Activated T-helper 2 cell treated with anti-CD3 and anti-CD28 coated beads, Interferon-gamma antibody, Interleukin-2, Interleukin-4, amounts not matched to agents 10 μg/mL and 5 μg/mL and 100 μg/mL, durations not matched to agents 14 hours and 24 hours and 36 hours (primary cell): ENCODE measurements at regions of chr11 and their contacts with region 1.

Region 1: GRCh38 chr11:121464352-121464946 is 11.7 kb upstream of the SORL1-AS1 start:
- DNase-seq: peak; percentile 73
- H3K4me3 Mint-ChIP-seq: peak overlapping the region; percentile 11
- H3K27ac Mint-ChIP-seq: peak overlapping the region; percentile 92
- H3K4me1 Mint-ChIP-seq: peaks cover 86% of the 10 kb centered on the region
- H3K27me3 Mint-ChIP-seq: no peaks in the 10 kb centered on the region

Region 2: GRCh38 chr11:121367001-121367843 is 97.2 kb before region 1 on chr11:
- intact Hi-C with region 1: no loop called
- DNase-seq: peak; percentile 10
- H3K4me3 Mint-ChIP-seq: peak overlapping the region; percentile 62
- H3K27ac Mint-ChIP-seq: peak overlapping the region; percentile 70
- H3K4me1 Mint-ChIP-seq: peaks cover 29% of the 10 kb centered on the region
- H3K27me3 Mint-ChIP-seq: no peaks in the 10 kb centered on the region

Region 3: DNA sequence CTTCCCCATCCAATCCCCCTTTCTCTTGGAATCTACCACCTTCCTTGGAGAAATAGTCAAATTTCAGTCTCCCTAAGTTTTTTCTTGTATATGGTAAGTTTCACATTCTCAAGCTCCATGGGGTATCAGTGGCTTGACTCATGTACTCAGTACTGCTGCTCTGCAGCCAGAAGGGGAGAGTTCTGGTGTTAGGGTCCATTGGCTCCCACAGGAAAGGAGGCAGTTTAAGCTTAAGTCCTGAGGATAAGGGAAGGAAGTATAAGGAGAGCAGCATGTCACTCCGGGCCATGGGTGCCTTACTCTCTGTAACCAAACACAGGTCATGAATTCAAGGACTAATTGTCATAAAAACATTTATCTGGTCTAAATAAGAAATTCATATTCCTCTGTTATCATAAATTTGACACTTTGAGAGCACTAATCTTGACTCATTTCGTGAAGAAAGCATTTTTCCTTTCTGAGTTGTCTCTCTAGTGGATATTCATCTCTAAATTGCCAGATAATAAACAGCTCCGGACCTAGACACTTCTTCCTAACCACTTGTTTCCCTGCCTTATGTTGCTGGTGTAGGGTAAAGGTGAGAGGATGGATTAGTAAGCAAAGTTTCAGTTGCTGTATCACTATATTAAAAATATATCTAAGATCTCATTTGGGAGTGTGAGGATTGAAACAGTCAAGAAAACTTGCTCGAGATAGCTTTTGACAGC is 32.5 kb before region 1 on chr11:
- intact Hi-C with region 1: loop called (anchors 2 kb)
- DNase-seq: no peak
- H3K4me3 Mint-ChIP-seq: no peak overlapping the region
- H3K27ac Mint-ChIP-seq: no peak overlapping the region
- H3K4me1 Mint-ChIP-seq: peaks cover 17% of the 10 kb centered on the region
- H3K27me3 Mint-ChIP-seq: peaks cover 5% of the 10 kb centered on the region

Region 4: GRCh38 chr11:121482231-121483129 is 18.0 kb after region 1 on chr11:
- intact Hi-C with region 1: loop called (anchors 1 kb)
- DNase-seq: peak; percentile 52
- H3K4me3 Mint-ChIP-seq: peak overlapping the region; percentile 71
- H3K27ac Mint-ChIP-seq: peak overlapping the region; percentile 92
- H3K4me1 Mint-ChIP-seq: peaks cover 33% of the 10 kb centered on the region
- H3K27me3 Mint-ChIP-seq: no peaks in the 10 kb centered on the region

Region 5: GRCh38 chr11:121494355-121495099 is 30.1 kb after region 1 on chr11:
- intact Hi-C with region 1: loop called (anchors 1 kb)
- DNase-seq: no peak
- H3K4me3 Mint-ChIP-seq: peak overlapping the region; percentile 6
- H3K27ac Mint-ChIP-seq: peak overlapping the region; percentile 40
- H3K4me1 Mint-ChIP-seq: peaks cover 32% of the 10 kb centered on the region
- H3K27me3 Mint-ChIP-seq: no peaks in the 10 kb centered on the region

Region 6: GRCh38 chr11:121582296-121582695 is 117.8 kb after region 1 on chr11:
- intact Hi-C with region 1: loop called (anchors 5 kb)
- DNase-seq: no peak
- H3K4me3 Mint-ChIP-seq: no peak overlapping the region
- H3K27ac Mint-ChIP-seq: peak overlapping the region; percentile 77
- H3K4me1 Mint-ChIP-seq: peaks cover 29% of the 10 kb centered on the region
- H3K27me3 Mint-ChIP-seq: no peaks in the 10 kb centered on the region

Region 7: DNA sequence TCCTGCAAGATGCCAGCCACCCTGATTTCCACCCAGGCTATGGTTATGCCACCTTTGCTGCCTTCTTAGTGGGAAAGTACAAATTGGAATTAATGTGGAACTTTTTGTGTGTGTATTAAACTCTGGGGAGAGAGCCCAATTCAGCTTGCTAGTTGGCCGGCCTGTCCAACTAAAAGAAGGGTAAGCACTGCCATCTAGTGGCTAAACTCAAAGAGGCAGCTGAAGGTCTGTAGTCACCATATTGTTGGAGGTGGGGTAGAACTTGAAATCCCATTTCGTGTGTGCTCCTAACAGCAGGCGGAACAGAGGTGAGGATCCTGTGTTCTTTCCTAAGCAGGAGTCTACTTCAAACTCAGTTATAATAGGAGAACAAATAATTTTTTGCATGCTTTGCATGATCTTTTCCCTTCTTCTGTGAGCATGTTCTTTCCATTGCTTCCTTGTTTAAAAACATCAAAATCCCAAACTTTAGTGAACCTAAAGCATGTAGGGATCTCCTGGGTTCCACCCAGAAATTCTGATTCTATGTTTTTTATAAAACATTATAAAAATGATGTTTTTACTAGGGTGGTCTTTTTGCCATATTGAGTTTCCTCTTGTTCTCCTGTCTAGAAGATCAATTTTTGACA is 127.1 kb after region 1 on chr11:
- intact Hi-C with region 1: loop called (anchors 2 kb)
- DNase-seq: peak; percentile 56
- H3K4me3 Mint-ChIP-seq: no peak overlapping the region
- H3K27ac Mint-ChIP-seq: no peak overlapping the region
- H3K4me1 Mint-ChIP-seq: peaks cover 21% of the 10 kb centered on the region
- H3K27me3 Mint-ChIP-seq: no peaks in the 10 kb centered on the region